Mammary epithelial cell (primary cell): ENCODE measurements at regions of chr1 and their contacts with region 1.

Region 1: GRCh38 chr1:153352523-153352922 is 3.9 kb upstream of the PGLYRP4 start:
- DNase-seq: peak; percentile 45
- H3K4me3 ChIP-seq: no peak overlapping the region
- H3K27ac ChIP-seq: no peak overlapping the region
- H3K4me1 ChIP-seq: peaks cover 12% of the 10 kb centered on the region
- H3K27me3 ChIP-seq: no peaks in the 10 kb centered on the region
- CTCF ChIP-seq: peak; percentile 85 to 95

Region 2: DNA sequence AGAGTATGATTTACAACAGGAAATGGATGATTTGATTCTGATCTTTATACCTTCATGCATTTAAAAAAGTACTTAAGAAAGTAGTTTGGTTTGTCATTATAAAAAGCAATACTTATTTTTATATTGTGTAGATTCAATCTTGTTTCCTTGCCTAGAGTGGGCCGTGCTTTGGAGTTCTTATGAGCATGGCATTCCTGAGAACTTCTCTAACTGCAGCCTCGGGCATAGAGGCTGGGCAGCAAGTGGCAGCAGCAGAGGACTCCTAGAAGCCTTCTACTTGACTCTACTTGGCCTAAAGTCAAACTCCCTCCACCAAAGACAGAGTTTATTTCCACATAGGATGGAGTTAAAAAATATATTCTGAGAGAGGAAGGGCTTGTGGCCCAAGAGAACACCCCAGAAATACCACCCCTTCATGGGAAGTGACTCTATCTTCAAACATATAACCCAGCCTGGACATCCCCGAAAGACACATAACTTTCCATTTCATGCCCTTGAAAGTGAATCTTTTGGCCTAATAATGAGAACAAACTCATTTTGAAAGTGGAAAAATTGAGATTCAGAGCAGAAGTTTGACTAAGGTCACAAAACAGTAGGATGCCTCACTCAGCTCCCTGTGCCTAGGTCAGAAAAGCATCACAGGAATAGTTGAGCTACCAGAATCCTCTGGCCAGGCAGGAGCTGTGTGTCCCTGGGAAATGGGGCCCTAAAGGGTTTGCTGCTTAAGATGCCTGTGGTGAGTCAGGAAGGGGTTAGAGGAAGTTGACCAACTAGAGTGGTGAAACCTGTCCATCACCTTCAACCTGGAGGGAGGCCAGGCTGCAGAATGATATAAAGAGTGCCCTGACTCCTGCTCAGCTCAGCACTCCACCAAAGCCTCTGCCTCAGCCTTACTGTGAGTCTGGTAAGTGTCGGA is 444.6 kb before region 1 on chr1 and contains the start of gene IVL:
- CTCF ChIA-PET with region 1: no interaction called
- dilution Hi-C with region 1: no loop called
- in situ Hi-C with region 1: no loop called
- intact Hi-C with region 1: no loop called
- DNase-seq: peak; percentile 87
- H3K4me3 ChIP-seq: no peak within 1 kb of the TSS
- H3K27ac ChIP-seq: peak within 1 kb of the TSS; percentile 90
- H3K4me1 ChIP-seq: peaks cover 73% of the 10 kb centered on the region
- H3K27me3 ChIP-seq: no peaks in the 10 kb centered on the region
- CTCF ChIP-seq: no peak
- total RNA-seq, gene IVL: 0.50 to 19.1 TPM

Region 3: DNA sequence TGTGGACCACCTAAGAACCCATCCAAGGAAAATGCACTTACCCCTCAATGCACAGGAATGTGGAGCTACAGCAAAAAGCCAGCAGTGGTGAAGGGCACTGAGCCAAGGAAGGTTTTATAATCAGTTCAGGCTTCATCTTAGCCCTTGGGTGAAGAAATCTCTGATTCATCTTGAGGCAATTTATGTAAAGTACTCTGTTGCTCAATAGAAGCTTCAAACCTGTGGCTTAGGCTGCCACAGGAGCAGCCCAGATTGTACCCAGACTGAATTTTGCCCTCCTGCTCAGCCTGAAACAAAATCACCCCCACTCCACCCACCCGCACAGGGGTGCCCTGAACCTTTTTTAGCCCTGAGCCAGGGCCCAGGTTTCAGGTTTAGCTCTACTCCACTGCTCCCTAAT is 23.0 kb after region 1 on chr1 and contains the start of gene S100A12:
- CTCF ChIA-PET with region 1: no interaction called
- dilution Hi-C with region 1: no loop called
- in situ Hi-C with region 1: no loop called
- intact Hi-C with region 1: loop called (anchors 1 kb)
- DNase-seq: peak; percentile 94
- H3K4me3 ChIP-seq: no peak within 1 kb of the TSS
- H3K27ac ChIP-seq: no peak within 1 kb of the TSS
- H3K4me1 ChIP-seq: peaks cover 33% of the 10 kb centered on the region
- H3K27me3 ChIP-seq: no peaks in the 10 kb centered on the region
- CTCF ChIP-seq: no peak
- total RNA-seq, gene S100A12: 0.66 TPM in 1 of 2 donors, not detected in the other

Region 4: DNA sequence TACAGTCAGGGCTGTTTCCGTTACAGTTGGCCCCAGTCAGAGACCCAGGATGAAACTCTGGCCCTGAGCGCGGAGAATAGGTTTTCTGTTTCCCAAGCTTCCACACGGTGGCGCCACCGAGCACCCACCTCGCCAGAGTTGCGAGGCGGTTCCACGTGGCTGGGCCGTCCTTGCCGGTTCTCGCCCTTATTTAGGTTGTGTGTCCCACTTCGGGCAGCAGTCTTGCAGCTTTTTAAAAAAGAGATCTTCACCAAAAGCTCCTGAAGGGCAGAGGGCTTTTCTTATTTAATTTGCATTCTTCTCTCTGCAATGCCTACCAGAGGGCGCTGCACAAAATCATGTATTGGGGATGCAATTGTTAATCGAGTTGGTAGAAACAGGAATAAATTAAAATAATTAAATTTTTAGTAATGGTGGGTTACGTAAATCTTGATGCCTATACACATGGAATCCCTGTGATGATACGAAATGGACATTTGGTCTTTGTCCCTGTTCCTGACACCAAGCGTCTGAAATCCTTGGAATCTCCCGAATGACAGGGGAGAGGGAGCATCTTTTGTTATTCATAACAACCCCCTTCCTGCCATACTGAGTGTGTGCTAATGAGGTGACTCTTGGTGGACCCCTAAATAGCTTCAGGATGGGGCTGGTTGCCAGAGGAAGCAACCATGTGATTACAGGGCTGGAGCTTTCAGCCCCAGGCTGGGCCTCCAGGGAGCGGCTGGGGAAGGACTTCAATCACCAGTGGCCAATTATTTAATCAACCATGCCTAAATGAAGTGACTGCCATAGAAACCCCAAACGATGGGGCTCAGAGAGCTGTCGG is 113.5 kb after region 1 on chr1:
- CTCF ChIA-PET with region 1: no interaction called
- dilution Hi-C with region 1: no loop called
- in situ Hi-C with region 1: no loop called
- intact Hi-C with region 1: loop called (anchors 1 kb)
- DNase-seq: peak; percentile 39
- H3K4me3 ChIP-seq: no peak overlapping the region
- H3K27ac ChIP-seq: no peak overlapping the region
- H3K4me1 ChIP-seq: peaks cover 13% of the 10 kb centered on the region
- H3K27me3 ChIP-seq: peaks cover 3% of the 10 kb centered on the region
- CTCF ChIP-seq: peak; percentile 76 to 78

Region 5: DNA sequence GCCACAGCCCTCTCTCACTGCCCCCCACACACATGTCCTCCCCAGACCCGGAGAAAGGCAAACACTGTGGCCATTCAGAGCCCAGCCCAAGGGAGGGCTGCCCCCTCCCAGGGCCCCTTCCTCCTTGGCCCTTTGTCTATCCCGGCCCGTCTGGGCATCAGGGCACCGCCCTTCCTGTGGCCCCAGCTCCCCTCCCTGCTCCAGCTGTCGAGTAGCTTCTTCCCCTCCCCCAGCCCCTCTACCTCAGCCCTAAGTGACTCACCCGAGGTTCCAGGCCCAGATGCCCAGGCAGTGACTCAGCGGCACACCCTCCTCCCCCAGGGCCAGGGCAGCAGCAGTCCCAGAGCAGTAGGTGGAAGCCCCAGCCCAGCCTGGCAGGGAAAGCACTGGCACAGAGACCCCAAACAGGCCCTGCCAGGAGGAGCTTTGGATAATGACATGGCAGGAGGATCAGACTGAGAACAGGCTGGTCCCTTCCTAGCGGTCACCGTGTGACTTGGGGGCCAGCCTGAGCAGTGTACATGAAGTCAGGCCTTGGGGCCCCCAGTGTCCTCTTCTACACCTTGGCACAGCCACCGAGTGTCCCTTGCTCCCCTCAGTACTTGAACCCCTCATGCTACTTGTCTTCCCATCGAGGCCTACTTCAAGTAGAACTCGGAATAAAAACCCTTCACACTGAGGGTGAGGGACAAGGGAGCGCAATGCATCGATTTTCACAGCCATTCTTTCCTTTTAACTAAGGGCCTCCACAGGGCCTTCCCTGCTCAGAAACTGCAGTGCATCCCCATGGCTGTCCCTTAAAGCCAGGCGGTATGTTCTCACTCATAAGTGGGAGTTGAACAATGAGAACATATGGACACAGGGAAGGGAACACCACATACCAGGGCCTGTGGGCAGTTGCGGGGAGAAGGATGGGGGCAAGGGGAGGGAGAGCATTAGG is 214.2 kb after region 1 on chr1:
- CTCF ChIA-PET with region 1: no interaction called
- dilution Hi-C with region 1: loop called (anchors 5 kb)
- in situ Hi-C with region 1: no loop called
- intact Hi-C with region 1: loop called (anchors 1 kb)
- DNase-seq: peak; percentile 99
- H3K4me3 ChIP-seq: peak overlapping the region in 2 of 3 experiments; percentile 61 to 98
- H3K27ac ChIP-seq: peak overlapping the region; percentile 100
- H3K4me1 ChIP-seq: peaks cover 40% of the 10 kb centered on the region
- H3K27me3 ChIP-seq: no peaks in the 10 kb centered on the region
- CTCF ChIP-seq: no peak

Region 6: GRCh38 chr1:153670859-153671627 is 318.5 kb after region 1 on chr1 and contains the start of gene ILF2:
- CTCF ChIA-PET with region 1: no interaction called
- dilution Hi-C with region 1: no loop called
- in situ Hi-C with region 1: no loop called
- intact Hi-C with region 1: loop called (anchors 5 kb)
- DNase-seq: peak; percentile 99
- H3K4me3 ChIP-seq: peak within 1 kb of the TSS; percentile 66 to 96 (median 82)
- H3K27ac ChIP-seq: peak within 1 kb of the TSS; percentile 81
- H3K4me1 ChIP-seq: peaks cover 15% of the 10 kb centered on the region
- H3K27me3 ChIP-seq: no peaks in the 10 kb centered on the region
- CTCF ChIP-seq: peak in 1 of 2 donors; percentile 35
- total RNA-seq, gene ILF2: 151 to 158 TPM